AG04449 (cell line): ENCODE measurements at regions of chr19 and their contacts with region 1.

Region 1: DNA sequence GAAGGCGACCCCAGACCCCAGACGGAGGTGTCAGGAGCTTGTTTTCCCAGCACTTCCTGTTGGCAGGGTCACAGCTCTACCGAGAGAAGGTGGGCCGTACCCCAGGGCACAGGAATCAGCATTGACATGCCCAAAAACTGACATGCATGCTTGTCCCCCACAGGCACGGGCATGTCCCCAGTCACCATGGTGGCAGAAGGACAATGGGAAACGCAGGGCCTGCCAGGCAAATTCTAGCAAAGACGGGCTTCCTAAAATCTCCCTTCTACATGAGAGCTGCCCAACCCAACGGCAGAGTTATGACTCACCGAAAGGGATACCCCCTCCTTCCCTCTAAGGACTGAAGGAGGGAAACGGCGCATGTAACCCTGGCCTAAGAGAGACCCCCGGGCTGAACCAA is 18.5 kb downstream of the TSHZ3 start:
- DNase-seq: no peak
- H3K4me3 ChIP-seq: no peak overlapping the region
- CTCF ChIP-seq: no peak

Region 2: DNA sequence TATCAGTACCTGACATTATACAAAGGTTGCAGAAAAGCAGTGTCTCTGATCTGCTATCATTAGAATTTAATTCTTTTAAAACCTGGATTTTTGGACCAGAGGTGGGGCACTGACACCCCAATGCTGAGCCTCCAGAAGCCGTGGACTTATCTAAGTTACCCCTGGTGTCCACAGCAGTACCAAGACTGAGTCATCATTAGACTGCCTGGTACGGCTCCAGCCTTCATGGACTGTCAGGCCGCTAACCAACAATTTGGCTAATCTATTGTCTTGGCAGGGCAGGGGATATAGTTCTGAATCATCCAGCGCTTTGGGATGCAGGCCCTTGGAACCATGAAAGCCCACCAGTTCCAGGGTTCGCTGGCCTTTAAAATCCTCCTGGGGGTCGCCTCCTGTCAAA is 59.9 kb before region 1 on chr19:
- CTCF ChIA-PET with region 1: no interaction called
- POLR2A ChIA-PET with region 1: no interaction called
- DNase-seq: no peak
- H3K4me3 ChIP-seq: no peak overlapping the region
- CTCF ChIP-seq: no peak

Region 3: DNA sequence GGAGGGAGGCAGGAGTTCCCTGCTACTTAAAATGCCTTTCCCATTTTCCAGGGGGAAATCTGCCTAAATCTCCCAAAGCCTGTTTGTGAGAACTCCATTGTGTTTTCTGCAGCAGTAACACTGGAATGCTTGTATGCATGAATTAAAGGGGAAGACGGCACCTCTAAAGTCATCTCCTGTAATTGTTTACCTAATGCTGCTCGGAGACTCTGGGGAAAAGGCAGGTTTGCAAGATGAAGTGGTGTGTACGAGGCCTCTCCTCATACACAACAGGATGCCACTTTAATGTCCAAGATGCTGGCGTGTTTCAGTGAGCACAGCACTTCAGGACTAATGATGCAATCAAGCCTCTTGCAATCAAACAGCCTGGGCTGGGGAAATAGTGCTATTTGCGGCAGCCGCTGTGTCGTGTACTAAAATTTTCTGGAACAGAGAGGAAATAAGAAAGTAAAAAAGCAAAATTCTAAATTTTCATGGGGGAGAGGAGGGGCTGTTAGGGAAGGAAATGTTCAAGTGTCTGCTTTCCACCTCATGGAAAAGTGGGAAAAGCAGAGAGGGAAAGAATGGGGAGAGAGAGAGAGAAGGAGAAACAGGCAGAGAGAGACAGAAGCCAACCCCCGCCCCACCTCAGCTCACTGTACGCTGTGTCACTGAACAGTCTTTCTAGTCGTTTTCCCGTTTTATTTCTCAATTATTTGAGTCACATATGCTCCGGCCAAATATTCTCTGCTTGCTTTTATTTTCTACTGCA is 14.4 kb before region 1 on chr19:
- CTCF ChIA-PET with region 1: interaction called, 11 read pairs
- POLR2A ChIA-PET with region 1: no interaction called
- DNase-seq: no peak
- H3K4me3 ChIP-seq: no peak overlapping the region
- CTCF ChIP-seq: no peak